ENCODE measurements at regions of chr19 and their contacts with region 1.

Region 1: GRCh38 chr19:19531951-19532805 is 3.5 kb downstream of the YJEFN3 start:
- DNase-seq: peak; percentile 68 to 79 (median 75)
- H3K4me3 ChIP-seq: no peak overlapping the region
- H3K4me3 Mint-ChIP-seq: no peak overlapping the region
- H3K27ac ChIP-seq: no peak overlapping the region
- H3K27ac Mint-ChIP-seq: no peak overlapping the region
- H3K4me1 ChIP-seq: peaks cover 0 to 3% of the 10 kb centered on the region in 2 donors
- H3K4me1 Mint-ChIP-seq: peaks cover 6% of the 10 kb centered on the region
- H3K27me3 ChIP-seq: peaks cover 0 to 6% of the 10 kb centered on the region in 2 donors
- H3K27me3 Mint-ChIP-seq: peaks cover 4 to 17% (median 12%) of the 10 kb centered on the region in 3 donors
- CTCF ChIP-seq: peak; percentile 91

Region 2: GRCh38 chr19:19643158-19644053 is 111.2 kb after region 1 on chr19 and contains the start of gene GMIP:
- intact Hi-C with region 1: loop called (anchors 1 to 2 kb)
- DNase-seq: peak; percentile 64 to 70 (median 70)
- H3K4me3 ChIP-seq: peak within 1 kb of the TSS; percentile 80 to 95 (median 94)
- H3K4me3 Mint-ChIP-seq: peak within 1 kb of the TSS; percentile 99
- H3K27ac ChIP-seq: peak within 1 kb of the TSS; percentile 84 to 95
- H3K27ac Mint-ChIP-seq: peak within 1 kb of the TSS; percentile 91 to 98 (median 96)
- H3K4me1 ChIP-seq: peaks cover 32 to 36% of the 10 kb centered on the region in 2 donors
- H3K4me1 Mint-ChIP-seq: peaks cover 24% of the 10 kb centered on the region
- H3K27me3 ChIP-seq: no peaks in the 10 kb centered on the region
- H3K27me3 Mint-ChIP-seq: peaks cover 0 to 1% (median 0%) of the 10 kb centered on the region in 3 donors
- CTCF ChIP-seq: peak; percentile 92
- polyA plus RNA-seq, gene GMIP: 41.4 to 91.4 (median 75.1) TPM

Region 3: DNA sequence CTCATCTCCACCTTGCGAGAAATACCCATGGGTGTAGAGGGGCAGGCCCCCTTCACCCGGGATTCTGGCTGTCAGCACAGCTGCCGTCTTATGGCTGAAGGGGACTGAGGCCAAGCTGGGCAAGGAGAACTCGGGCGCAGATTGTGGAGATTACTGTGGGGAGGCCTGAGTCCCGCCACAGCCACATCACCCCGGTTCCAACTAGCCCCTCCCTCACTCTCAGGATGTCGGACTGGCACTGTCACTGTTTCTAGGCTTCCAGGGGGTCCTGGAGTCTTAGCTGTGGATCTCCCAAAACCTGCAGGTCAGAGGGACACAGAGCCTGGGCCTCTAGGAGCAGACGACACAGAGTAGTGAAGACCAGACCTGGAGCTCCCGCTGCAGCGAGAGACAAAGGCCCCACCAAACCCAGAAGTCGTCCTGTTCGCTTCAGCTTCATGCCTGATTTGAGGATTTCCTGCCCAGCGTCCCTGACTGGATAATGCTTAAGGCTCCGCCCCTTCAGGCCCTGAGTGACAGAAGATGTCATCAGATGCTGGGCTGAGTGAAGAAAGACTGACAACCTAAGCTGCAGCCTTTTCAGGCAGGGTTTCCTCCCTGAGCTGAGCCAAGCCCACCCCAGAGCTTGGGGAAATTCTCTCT is 424.4 kb after region 1 on chr19:
- intact Hi-C with region 1: loop called (anchors 2 to 5 kb)
- DNase-seq: no peak
- H3K4me3 ChIP-seq: no peak overlapping the region
- H3K4me3 Mint-ChIP-seq: no peak overlapping the region
- H3K27ac ChIP-seq: no peak overlapping the region
- H3K27ac Mint-ChIP-seq: peak overlapping the region in 1 of 7 donors; percentile 2
- H3K4me1 ChIP-seq: no peaks in the 10 kb centered on the region
- H3K4me1 Mint-ChIP-seq: no peaks in the 10 kb centered on the region
- H3K27me3 ChIP-seq: no peaks in the 10 kb centered on the region
- H3K27me3 Mint-ChIP-seq: peaks cover 0 to 2% (median 0%) of the 10 kb centered on the region in 3 donors
- CTCF ChIP-seq: no peak